Heart right ventricle (tissue), 16 donors: ENCODE measurements at regions of chr1 and their contacts with region 1.

Region 1: DNA sequence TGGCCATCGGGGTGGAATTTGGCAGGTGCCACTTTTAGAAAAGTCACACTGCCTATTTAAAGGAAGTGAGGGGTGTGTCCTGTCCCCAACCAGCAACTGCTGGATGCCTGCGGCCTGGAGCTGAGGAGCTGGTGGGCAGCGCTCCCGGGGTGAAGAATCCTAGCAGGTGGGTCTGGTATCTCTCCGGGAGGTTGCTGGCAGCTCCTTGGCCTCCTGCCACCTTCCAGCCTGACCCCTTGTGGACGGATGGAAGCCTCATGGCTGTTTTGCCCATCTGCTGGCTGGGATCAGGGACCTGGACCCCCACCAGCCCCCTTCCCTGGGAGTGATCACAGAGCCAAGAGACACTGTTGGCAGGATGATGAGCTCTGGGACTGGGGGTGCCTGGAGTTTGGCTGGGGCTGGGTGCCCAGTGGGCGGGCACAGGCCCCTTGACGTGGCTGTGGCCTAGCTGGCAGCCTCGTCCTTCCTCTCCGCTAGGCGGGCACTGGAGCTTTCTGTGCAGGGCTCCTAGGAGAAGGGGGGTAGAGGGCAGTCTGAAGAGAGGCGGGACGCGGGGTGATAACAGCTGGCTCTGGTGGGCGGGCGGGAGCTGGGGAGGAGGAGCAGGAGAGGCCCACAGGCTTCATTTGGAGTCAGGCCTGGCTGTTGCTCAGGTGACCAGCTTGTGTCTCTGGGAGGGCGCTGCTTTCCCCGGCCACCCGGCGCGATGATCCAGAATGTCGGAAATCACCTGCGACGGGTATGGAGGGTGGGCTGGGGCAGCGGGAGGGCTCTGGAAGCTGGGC is at the start of gene ACOT11:
- DNase-seq: peak; percentile 85 to 90
- ATAC-seq: peak; percentile 85 to 93 (median 90)
- H3K4me3 ChIP-seq: peak within 1 kb of the TSS; percentile 41 to 62 (median 50)
- H3K27ac ChIP-seq: peak within 1 kb of the TSS; percentile 80 to 95 (median 89)
- H3K4me1 ChIP-seq: peaks cover 3 to 46% (median 19%) of the 10 kb centered on the region in 9 donors
- H3K27me3 ChIP-seq: no peaks in the 10 kb centered on the region
- CTCF ChIP-seq: peak in 8 of 9 donors; percentile 11 to 69 (median 49)
- total RNA-seq, gene ACOT11: 25.8 to 77.2 (median 59.4) TPM

Region 2: GRCh38 chr1:54581621-54582035 is 33.8 kb after region 1 on chr1:
- intact Hi-C with region 1: loop called in 5 of 10 experiments (anchors 1 to 5 kb)
- DNase-seq: peak; percentile 89 to 90
- ATAC-seq: peak; percentile 76 to 92 (median 84)
- H3K4me3 ChIP-seq: no peak overlapping the region
- H3K27ac ChIP-seq: peak overlapping the region; percentile 68 to 93 (median 88)
- H3K4me1 ChIP-seq: peaks cover 19 to 91% (median 68%) of the 10 kb centered on the region in 9 donors
- H3K27me3 ChIP-seq: no peaks in the 10 kb centered on the region
- CTCF ChIP-seq: peak in 1 of 9 donors; percentile 7

Region 3: DNA sequence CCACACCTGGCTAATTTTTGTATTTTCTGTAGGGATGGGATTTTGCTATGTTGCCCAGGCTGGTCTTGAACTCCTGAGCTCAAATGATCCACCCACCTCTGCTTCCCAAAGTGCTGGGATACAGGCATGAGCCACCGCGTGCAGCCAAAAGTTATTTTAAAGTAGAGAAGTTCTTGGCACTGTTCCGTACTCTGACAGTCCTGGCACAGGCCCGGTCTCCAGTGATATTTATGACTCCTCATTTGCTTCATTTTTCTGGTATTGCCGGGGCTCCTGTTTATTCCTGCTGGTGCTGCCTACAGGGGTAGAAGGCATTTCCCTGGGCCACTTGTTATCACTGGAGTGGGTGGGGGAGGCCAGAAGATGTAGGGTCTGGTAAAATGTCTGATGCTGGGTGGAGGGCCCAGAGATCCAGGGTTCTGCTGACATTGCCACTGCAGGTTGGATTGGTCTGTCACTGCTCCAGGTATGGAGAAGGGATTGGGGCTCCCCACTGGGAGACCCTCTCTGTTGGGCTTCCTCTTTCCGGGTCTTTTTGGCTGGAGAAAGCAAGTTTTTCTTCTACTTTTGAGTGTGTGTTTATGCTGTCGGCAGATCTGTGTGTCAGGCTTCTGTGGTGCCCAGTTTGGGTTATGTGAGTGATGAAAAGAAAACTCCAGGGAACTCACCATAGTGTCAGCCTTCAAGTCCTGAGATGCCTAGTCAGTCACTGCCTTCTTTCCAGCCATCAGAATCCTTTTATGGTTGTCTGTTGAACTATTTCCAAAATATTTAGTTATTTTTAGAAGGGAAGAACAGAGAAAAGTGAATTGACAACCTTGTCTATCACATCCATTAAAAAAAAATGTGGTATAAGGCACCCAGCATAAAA is 98.2 kb after region 1 on chr1:
- intact Hi-C with region 1: loop called in 1 of 10 experiments (anchors 5 kb)
- DNase-seq: peak; percentile 41 to 59
- ATAC-seq: peak; percentile 75 to 94 (median 89)
- H3K4me3 ChIP-seq: no peak overlapping the region
- H3K27ac ChIP-seq: peak overlapping the region; percentile 33 to 90 (median 82)
- H3K4me1 ChIP-seq: peaks cover 0 to 25% (median 0%) of the 10 kb centered on the region in 9 donors
- H3K27me3 ChIP-seq: no peaks in the 10 kb centered on the region
- CTCF ChIP-seq: no peak